Mammary epithelial cell (primary cell): ENCODE measurements at regions of chr7 and their contacts with region 1.

Region 1: GRCh38 chr7:37448636-37449361 is at the start of gene ELMO1:
- DNase-seq: peak; percentile 57
- H3K4me3 ChIP-seq: peak within 1 kb of the TSS; percentile 27 to 46 (median 36)
- H3K27ac ChIP-seq: no peak within 1 kb of the TSS
- H3K4me1 ChIP-seq: peaks cover 13% of the 10 kb centered on the region
- H3K27me3 ChIP-seq: peaks cover 22% of the 10 kb centered on the region
- CTCF ChIP-seq: peak; percentile 14 to 33
- total RNA-seq, gene ELMO1: 9.5 to 12.1 TPM

Region 2: DNA sequence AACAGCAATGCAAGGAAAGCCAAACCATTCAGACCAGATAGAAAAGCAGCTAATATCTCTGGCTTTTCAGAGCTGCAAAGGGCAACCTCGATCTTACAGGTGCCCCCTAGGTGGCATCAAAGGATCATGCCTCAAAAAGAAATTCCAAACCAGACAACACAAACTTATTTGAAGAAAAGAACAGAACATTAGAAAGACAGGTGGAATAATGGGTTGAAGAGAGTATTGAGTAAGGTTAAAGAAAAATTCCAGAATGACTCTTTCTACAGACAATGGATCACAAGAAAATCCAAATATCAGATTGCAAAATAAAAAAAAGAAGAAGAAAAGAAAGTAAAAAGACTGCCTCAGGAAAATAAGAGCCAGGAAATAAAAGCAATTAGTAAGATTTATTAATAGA is 213.9 kb before region 1 on chr7:
- CTCF ChIA-PET with region 1: no interaction called
- dilution Hi-C with region 1: no loop called
- in situ Hi-C with region 1: no loop called
- intact Hi-C with region 1: loop called (anchors 5 kb)
- DNase-seq: peak; percentile 15
- H3K4me3 ChIP-seq: no peak overlapping the region
- H3K27ac ChIP-seq: no peak overlapping the region
- H3K4me1 ChIP-seq: no peaks in the 10 kb centered on the region
- H3K27me3 ChIP-seq: no peaks in the 10 kb centered on the region
- CTCF ChIP-seq: peak; percentile 22 to 68

Region 3: DNA sequence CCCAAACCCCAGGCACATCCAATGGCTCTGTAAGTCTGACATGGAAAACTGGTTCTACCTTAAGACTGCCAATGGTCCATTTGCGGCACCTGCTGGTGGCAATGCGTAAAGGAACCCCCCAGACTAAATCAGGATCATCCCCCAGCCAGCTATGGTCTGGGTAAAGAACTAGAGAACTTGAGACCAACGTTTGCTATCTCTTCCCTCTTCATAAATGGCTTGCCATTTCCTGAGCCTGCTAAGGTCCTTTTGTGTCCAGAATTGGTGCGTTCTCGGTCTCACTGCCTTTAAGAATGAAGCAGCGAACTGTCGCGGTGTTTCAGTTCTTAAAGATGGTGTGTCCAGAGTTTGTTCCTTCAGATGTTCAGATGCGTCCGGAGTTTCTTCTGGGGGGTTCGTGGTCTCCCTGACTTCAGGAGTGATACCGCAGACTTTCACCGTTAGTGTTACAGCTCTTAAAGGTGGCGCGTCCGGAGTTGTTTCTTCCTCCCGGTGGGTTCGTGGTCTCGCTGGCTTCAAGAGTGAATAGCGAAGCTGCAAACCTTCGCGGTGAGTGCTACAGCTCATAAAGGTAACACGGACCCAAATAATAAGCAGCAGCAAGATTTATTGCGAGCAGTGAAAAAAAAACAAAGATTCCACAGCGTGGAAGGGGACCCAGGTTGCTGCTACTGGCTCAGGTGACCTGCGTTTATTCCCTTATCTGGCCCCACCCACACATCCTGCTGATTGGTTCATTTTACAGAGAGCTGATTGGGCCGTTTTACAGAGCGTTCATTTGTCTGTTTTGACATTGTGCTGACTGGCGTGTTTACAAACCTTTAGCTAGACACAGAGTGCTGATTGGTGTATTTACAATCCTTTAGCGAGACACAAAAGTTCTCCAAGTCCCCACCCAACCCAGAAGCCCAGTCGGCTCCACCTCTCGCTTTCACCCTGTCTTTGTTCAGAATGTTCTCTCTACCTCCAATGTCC is 95.5 kb before region 1 on chr7:
- CTCF ChIA-PET with region 1: no interaction called
- dilution Hi-C with region 1: no loop called
- in situ Hi-C with region 1: no loop called
- intact Hi-C with region 1: loop called (anchors 5 kb)
- DNase-seq: no peak
- H3K4me3 ChIP-seq: no peak overlapping the region
- H3K27ac ChIP-seq: no peak overlapping the region
- H3K4me1 ChIP-seq: no peaks in the 10 kb centered on the region
- H3K27me3 ChIP-seq: no peaks in the 10 kb centered on the region
- CTCF ChIP-seq: no peak

Region 4: DNA sequence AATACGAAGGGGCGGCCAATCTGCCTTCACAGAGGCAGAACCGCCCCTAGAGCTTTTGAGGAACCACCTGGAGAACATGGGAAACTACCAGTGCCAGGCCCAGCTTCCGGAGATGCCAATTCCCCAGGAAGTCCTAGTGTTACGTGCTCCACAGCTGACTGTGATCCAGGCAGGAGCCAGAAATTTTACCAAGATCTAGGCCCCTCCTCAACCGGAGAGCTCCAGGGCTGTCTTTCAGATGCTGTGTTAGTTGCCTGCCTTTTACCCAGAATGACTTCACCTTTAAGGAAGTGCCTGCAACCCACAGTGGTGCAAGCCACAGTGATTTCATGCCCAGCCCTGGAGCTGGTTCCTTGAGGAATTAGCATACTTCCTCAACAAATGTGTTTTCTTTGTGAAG is 63.0 kb before region 1 on chr7:
- CTCF ChIA-PET with region 1: no interaction called
- dilution Hi-C with region 1: no loop called
- in situ Hi-C with region 1: no loop called
- intact Hi-C with region 1: no loop called
- DNase-seq: peak; percentile 8
- H3K4me3 ChIP-seq: no peak overlapping the region
- H3K27ac ChIP-seq: no peak overlapping the region
- H3K4me1 ChIP-seq: no peaks in the 10 kb centered on the region
- H3K27me3 ChIP-seq: no peaks in the 10 kb centered on the region
- CTCF ChIP-seq: no peak

Region 5: GRCh38 chr7:37433166-37433565 is 15.6 kb before region 1 on chr7:
- CTCF ChIA-PET with region 1: no interaction called
- dilution Hi-C with region 1: no loop called
- in situ Hi-C with region 1: no loop called
- intact Hi-C with region 1: no loop called
- DNase-seq: no peak
- H3K4me3 ChIP-seq: no peak overlapping the region
- H3K27ac ChIP-seq: no peak overlapping the region
- H3K4me1 ChIP-seq: no peaks in the 10 kb centered on the region
- H3K27me3 ChIP-seq: no peaks in the 10 kb centered on the region
- CTCF ChIP-seq: no peak

Region 6: GRCh38 chr7:37495574-37496184 is 46.9 kb after region 1 on chr7:
- CTCF ChIA-PET with region 1: interaction called, 12 read pairs
- dilution Hi-C with region 1: no loop called
- in situ Hi-C with region 1: no loop called
- intact Hi-C with region 1: no loop called
- DNase-seq: peak; percentile 25
- H3K4me3 ChIP-seq: no peak overlapping the region
- H3K27ac ChIP-seq: no peak overlapping the region
- H3K4me1 ChIP-seq: no peaks in the 10 kb centered on the region
- H3K27me3 ChIP-seq: no peaks in the 10 kb centered on the region
- CTCF ChIP-seq: peak; percentile 61 to 70